Activated CD4-positive, alpha-beta memory T cell treated with anti-CD3 and anti-CD28 coated beads, Interleukin-2, amount 10 ng/mL, durations not matched to agents 7 days and 5 days (primary cell): ENCODE measurements at regions of chr19 and their contacts with region 1.

Region 1: GRCh38 chr19:5961969-5962945 is 15.7 kb downstream of the RANBP3 start:
- DNase-seq: peak; percentile 83
- H3K4me3 Mint-ChIP-seq: peak overlapping the region; percentile 56
- H3K27ac Mint-ChIP-seq: peak overlapping the region; percentile 97
- H3K4me1 Mint-ChIP-seq: peaks cover 75% of the 10 kb centered on the region
- H3K27me3 Mint-ChIP-seq: no peaks in the 10 kb centered on the region

Region 2: DNA sequence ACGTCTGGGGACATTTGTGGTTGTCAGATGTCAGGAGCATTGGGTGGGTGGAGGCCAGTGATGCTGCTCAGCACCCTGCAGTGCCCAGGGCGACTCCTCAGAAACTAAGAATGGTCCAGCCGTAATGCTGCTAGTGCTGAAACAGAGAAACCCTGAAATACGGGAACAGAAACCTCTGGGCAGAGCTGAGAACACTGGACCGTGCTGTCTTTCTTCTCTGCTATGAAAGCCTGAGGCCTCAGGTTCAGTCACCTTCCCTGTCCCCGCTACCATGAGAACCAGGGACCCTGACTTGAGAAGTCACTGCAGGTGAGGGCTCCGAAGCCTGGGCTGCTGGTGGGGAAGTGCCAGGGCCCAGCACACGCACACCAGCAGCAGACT is 34.8 kb before region 1 on chr19:
- CTCF ChIA-PET with region 1: no interaction called
- POLR2A ChIA-PET with region 1: no interaction called
- DNase-seq: no peak
- H3K4me3 Mint-ChIP-seq: no peak overlapping the region
- H3K27ac Mint-ChIP-seq: no peak overlapping the region
- H3K4me1 Mint-ChIP-seq: no peaks in the 10 kb centered on the region
- H3K27me3 Mint-ChIP-seq: no peaks in the 10 kb centered on the region

Region 3: DNA sequence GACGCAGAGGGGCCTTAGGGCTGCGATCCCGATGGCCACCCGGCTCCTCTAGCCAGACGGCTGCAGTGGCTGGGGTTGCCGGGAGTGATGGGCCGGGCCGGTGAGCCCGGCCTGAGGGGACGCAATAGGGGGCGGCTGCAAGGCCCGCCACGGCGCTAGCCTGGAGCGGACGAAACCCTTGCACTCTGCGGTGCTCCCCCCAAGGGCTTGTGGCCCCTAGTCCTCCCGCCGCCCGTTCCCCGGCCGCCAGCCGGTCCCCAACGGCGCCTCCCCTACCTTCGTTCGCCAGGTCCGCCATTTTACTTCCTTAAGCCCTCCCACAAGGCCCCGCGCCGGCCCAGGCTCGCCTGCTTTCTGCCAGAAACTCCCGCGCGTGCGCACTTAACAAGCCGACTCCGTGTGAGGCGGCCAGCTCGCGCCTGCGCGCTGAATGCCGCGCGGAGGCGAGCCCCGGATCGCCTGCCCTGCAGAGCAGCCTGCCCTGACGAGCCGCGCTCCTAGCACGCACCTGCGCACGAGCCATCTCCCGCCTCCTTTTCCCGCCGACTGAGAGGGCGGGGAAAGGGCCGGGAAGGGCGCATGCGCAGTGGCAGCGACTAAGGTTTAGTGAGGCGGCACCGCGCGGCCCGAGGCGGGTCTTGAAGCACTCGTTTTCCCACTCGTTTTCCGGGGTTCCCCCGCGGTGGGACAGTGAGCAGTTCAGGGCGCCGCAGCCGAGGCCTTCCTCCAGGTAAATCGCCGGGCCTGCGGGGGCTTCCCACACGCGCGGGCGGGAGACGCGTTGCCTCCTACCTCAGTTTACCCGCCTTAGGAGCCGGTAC is 15.7 kb after region 1 on chr19 and contains the start of gene RANBP3:
- CTCF ChIA-PET with region 1: interaction called, 62 read pairs
- POLR2A ChIA-PET with region 1: interaction called, 23 read pairs
- DNase-seq: peak; percentile 99
- H3K4me3 Mint-ChIP-seq: peak within 1 kb of the TSS; percentile 96
- H3K27ac Mint-ChIP-seq: peak within 1 kb of the TSS; percentile 89
- H3K4me1 Mint-ChIP-seq: peaks cover 64% of the 10 kb centered on the region
- H3K27me3 Mint-ChIP-seq: no peaks in the 10 kb centered on the region
- total RNA-seq, gene RANBP3: 78.1 to 85.1 TPM